Motor neuron (in vitro differentiated cells): ENCODE measurements at regions of chr2 and their contacts with region 1.

Region 1: DNA sequence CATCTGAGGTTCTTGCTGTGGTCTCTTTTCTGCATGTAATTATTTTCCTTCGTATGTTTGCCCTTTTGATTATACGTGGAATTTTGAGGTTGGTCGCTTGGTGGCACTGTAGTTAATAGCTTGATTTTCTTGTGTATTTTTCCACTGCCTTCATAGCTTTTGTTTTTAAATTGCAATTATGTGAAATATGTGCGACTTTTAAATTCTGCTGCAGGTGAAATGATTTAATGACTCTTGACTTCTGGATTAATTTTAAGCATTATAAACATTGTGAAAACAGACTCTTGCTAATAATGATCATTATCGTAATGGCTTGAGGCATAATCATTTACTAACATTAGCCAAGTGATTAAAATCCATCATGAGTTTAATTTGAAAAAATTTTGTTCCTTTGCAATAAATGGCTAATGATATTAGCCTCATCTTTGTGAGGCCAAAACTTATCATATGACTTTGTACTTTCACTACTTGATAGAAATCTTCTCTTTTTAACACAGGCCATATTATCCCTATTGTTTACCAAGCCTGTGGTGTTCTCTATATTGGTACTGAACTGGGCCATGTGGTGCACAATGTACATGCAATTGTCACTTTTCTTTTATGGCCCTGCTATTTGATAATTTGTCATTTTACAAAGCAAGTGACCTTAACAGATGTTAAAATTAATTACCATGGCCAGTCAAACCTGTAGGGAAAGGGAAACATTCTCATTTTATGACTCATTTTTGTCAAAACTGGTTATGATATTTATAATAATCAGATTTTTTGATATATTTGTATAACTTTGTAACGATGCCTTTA is 62.8 kb upstream of the NEUROD1 start:
- ATAC-seq: peak in 4 of 8 experiments; percentile 23 to 43 (median 30)
- H3K4me3 ChIP-seq: no peak overlapping the region
- H3K27ac ChIP-seq: no peak overlapping the region
- H3K4me1 ChIP-seq: no peaks in the 10 kb centered on the region

Region 2: GRCh38 chr2:181614874-181615638 is 128.1 kb before region 1 on chr2:
- in situ Hi-C with region 1: no loop called
- ATAC-seq: peak in 5 of 8 experiments; percentile 19 to 99 (median 75)
- H3K4me3 ChIP-seq: no peak overlapping the region
- H3K27ac ChIP-seq: peak overlapping the region in 1 of 2 donors; percentile 36
- H3K4me1 ChIP-seq: peaks cover 7 to 18% of the 10 kb centered on the region in 2 donors

Region 3: GRCh38 chr2:181904022-181904632 is 161.0 kb after region 1 on chr2:
- in situ Hi-C with region 1: loop called in 1 of 9 experiments (anchors 25 kb)
- ATAC-seq: peak in 1 of 8 experiments; percentile 44
- H3K4me3 ChIP-seq: no peak overlapping the region
- H3K27ac ChIP-seq: no peak overlapping the region
- H3K4me1 ChIP-seq: no peaks in the 10 kb centered on the region

Region 4: DNA sequence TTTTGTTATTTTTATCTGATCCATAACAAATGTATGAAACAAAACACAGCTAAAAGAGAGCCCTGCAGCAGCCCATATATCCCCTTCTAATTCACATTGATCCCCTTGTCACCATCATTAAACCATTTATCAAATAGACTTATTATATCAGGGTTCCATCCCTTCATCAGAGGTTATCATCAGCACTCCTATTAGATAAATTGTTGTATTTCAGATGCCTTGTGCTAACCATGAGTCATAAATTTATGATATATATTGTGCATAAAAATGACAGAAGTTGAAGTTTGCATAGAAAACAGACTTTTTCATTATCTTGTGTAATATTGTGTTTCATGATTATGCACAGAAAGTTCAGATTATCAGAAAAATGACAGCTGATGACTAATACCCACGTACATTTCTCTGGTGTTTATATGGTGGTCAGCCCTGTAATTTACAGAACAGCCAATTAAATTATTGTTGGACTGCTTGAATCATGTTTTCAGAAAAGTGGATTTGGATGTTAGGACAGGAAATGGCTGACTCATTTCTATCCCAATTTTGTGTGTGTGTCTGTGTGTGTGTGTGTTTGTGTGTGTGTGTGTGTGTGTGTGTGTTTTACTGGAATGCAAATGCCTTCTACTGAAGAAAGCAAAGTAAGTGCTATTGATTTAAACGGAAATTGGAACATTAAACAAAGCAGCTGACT is 323.4 kb after region 1 on chr2:
- in situ Hi-C with region 1: loop called in 2 of 9 experiments (anchors 25 kb)
- ATAC-seq: peak in 6 of 8 experiments; percentile 42 to 78 (median 58)
- H3K4me3 ChIP-seq: no peak overlapping the region
- H3K27ac ChIP-seq: no peak overlapping the region
- H3K4me1 ChIP-seq: no peaks in the 10 kb centered on the region

Region 5: DNA sequence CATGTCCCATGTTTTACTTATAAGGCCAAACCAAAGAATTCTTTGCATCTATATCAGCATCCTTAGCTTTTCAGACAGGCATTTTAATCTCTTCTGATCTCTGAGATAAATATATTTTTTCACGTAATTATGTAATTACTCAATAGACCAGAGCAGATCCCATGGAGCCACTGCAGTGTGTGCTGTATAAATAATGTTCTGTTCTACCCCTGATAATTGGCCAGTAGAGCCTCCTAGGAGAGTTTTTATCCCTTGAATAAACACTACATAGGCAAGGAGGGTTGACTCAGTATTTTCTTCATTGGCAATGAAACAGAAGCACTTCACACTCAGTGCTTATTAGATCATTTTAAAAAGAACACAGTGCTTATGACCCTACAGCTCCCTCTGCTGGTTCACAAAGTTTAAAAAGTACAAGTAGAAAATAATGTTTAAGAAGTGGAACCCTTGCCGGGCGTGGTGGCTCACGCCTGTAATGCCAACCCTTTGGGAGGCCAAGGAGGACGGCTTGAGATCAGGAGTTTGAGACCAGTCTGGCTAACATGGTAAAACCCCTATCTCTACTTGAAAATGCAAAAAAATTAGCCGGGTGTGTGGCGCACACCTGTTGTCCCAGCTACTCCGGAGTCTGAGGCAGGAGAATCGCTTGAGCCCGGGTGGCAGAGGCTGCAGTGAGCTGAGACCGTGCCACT is 334.5 kb after region 1 on chr2:
- in situ Hi-C with region 1: loop called in 4 of 9 experiments (anchors 25 kb)
- ATAC-seq: peak; percentile 41 to 96 (median 72)
- H3K4me3 ChIP-seq: no peak overlapping the region
- H3K27ac ChIP-seq: no peak overlapping the region
- H3K4me1 ChIP-seq: no peaks in the 10 kb centered on the region